Mammary epithelial cell (primary cell): ENCODE measurements at regions of chr19 and their contacts with region 1.

Region 1: GRCh38 chr19:49817964-49818648 is at the start of gene MED25:
- DNase-seq: peak; percentile 78
- H3K4me3 ChIP-seq: peak within 1 kb of the TSS; percentile 68 to 94 (median 93)
- H3K27ac ChIP-seq: peak within 1 kb of the TSS; percentile 99
- H3K4me1 ChIP-seq: peaks cover 6% of the 10 kb centered on the region
- H3K27me3 ChIP-seq: no peaks in the 10 kb centered on the region
- CTCF ChIP-seq: peak in 1 of 2 donors; percentile 26
- total RNA-seq, gene MED25: 18.3 to 51.8 TPM

Region 2: DNA sequence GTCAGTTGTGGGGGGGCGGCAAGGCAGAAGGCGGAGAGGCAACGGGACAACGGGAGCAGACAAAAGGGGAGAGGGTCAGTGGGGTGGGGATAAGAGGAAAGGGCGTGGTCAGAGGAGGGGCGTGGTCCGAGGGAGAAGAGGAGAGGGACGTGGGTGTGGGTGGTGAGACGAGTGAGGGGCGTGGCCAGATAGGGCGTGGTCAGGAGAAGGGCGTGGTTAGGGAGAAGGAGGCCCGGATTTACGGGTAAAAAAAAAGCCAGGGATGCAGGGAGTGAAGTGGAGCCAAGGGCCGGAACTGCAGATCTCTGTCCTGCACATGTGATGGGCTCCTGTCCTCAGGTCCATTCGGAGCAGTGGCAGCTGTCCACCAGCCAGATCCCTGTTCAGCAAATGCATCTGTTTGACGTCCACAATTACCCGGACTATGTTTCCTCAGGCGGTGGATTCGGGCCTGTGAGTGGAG is 105.7 kb before region 1 on chr19:
- CTCF ChIA-PET with region 1: no interaction called
- dilution Hi-C with region 1: loop called (anchors 10 kb)
- in situ Hi-C with region 1: no loop called
- intact Hi-C with region 1: no loop called
- DNase-seq: no peak
- H3K4me3 ChIP-seq: no peak overlapping the region
- H3K27ac ChIP-seq: no peak overlapping the region
- H3K4me1 ChIP-seq: no peaks in the 10 kb centered on the region
- H3K27me3 ChIP-seq: no peaks in the 10 kb centered on the region
- CTCF ChIP-seq: no peak

Region 3: GRCh38 chr19:49766007-49766937 is 51.8 kb before region 1 on chr19:
- CTCF ChIA-PET with region 1: no interaction called
- dilution Hi-C with region 1: no loop called
- in situ Hi-C with region 1: no loop called
- intact Hi-C with region 1: loop called (anchors 1 kb)
- DNase-seq: peak; percentile 100
- H3K4me3 ChIP-seq: peak overlapping the region; percentile 28 to 38 (median 35)
- H3K27ac ChIP-seq: peak overlapping the region; percentile 93
- H3K4me1 ChIP-seq: peaks cover 20% of the 10 kb centered on the region
- H3K27me3 ChIP-seq: no peaks in the 10 kb centered on the region
- CTCF ChIP-seq: no peak

Region 4: GRCh38 chr19:49869441-49870176 is 51.5 kb after region 1 on chr19:
- CTCF ChIA-PET with region 1: no interaction called
- dilution Hi-C with region 1: loop called (anchors 5 kb)
- in situ Hi-C with region 1: no loop called
- intact Hi-C with region 1: loop called (anchors 2 kb)
- DNase-seq: peak; percentile 100
- H3K4me3 ChIP-seq: peak overlapping the region; percentile 28 to 55 (median 48)
- H3K27ac ChIP-seq: peak overlapping the region; percentile 35
- H3K4me1 ChIP-seq: peaks cover 30% of the 10 kb centered on the region
- H3K27me3 ChIP-seq: no peaks in the 10 kb centered on the region
- CTCF ChIP-seq: no peak

Region 5: DNA sequence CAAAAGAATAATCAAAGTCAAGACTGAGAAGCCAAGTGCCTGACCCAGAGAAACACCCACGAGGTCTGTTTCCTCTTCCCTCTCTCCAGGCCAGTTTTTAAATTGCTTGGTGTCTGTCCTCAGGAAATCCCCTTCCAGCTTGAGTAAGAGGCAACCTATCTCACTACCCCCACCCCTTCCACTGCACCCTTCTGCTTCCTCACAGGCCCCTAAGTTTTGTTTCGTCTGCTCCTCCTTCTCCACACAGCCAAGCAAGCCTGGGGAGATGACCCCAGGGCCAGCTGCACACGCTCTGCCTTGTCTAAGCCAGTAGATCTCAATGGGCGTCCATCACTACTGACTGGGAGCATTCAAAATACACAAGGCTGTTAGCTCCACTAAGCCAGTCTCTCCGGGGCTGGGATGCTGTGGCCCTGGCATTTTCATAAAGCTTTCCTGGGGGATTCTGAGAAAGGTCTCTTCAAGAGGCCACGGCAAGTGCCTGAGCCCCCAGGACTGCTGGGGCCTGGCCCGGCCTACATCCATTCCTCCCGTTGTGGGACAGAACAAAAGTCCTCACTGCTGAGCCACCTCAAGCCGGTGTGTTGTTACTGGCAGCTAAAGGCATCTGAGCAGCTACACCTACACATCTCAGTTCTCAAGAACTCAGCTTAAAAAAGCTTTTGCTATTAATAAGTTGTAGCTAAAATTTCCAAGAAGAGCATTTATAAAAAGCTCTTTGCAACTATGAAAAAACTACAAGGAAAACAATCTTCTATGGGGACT is 93.5 kb after region 1 on chr19:
- CTCF ChIA-PET with region 1: no interaction called
- dilution Hi-C with region 1: loop called (anchors 5 kb)
- in situ Hi-C with region 1: no loop called
- intact Hi-C with region 1: no loop called
- DNase-seq: no peak
- H3K4me3 ChIP-seq: no peak overlapping the region
- H3K27ac ChIP-seq: no peak overlapping the region
- H3K4me1 ChIP-seq: no peaks in the 10 kb centered on the region
- H3K27me3 ChIP-seq: no peaks in the 10 kb centered on the region
- CTCF ChIP-seq: no peak